H1 (cell line): ENCODE measurements at regions of chr6 and their contacts with region 1.

Region 1: GRCh38 chr6:41622206-41622958 is 15.9 kb upstream of the MDFI start:
- DNase-seq: no peak
- H3K4me3 ChIP-seq: no peak overlapping the region
- H3K27ac ChIP-seq: no peak overlapping the region
- H3K4me1 ChIP-seq: no peaks in the 10 kb centered on the region; a peak in 2 of 7 replicates
- H3K27me3 ChIP-seq: no peaks in the 10 kb centered on the region
- CTCF ChIP-seq: no peak
- EP300 ChIP-seq: no peak
- POLR2A ChIP-seq: no peak
- RAD21 ChIP-seq: no peak

Region 2: GRCh38 chr6:41527721-41528590 is 94.4 kb before region 1 on chr6:
- CTCF ChIA-PET with region 1: no interaction called
- POLR2A ChIA-PET with region 1: no interaction called
- DNase-seq: no peak
- H3K4me3 ChIP-seq: no peak overlapping the region; a peak in 1 of 8 replicates
- H3K27ac ChIP-seq: no peak overlapping the region
- H3K4me1 ChIP-seq: peaks cover 4 to 18% (median 12%) of the 10 kb centered on the region in 4 experiments; a peak in 5 of 7 replicates
- H3K27me3 ChIP-seq: peaks cover 0 to 13% (median 4%) of the 10 kb centered on the region in 4 experiments; a peak in 6 of 7 replicates
- CTCF ChIP-seq: no peak
- EP300 ChIP-seq: no peak
- POLR2A ChIP-seq: no peak
- RAD21 ChIP-seq: no peak

Region 3: DNA sequence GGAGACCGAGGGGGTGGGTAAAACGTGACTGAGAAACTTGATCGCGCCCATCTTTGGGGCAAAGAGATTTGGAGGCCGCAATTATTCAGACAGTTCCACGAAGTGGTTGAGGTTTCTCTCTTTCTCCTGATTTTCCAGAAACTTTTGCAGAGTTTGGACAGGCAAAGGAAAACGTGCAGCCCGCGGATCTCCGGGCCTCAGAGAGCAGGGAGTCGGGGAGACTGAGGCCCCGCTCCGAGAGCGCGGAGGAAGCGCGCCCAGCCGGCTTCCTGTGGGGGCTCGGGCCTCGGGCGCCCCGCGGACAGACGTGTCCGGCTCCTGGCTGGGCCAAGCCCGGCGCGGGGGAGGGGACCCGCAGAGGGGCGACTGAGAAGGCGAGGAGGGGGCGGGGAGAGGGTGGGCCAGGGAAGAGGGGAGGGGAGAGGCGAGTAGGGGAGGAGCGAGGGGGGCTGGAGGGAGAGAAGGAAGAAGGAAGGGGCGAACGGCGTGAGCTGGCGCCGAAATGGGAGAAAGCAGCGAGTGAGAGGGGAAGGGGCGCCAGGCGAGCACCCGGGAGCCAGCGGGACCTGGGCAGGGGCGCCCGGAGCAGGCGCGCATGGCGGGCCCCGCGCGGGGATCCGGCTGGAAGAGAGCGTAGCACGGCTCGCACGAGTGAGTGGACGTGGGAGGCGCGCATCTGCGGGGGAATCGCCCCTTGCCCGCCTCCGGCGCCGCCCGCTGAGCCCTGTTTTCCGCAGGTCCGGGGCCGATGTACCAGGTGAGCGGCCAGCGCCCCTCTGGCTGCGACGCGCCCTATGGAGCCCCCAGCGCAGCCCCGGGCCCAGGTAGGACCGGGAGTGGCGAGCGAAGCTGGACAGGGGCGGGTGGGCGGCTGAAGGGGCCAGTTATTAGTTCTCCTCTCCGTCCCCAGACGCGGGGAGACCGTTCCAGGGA is 15.9 kb after region 1 on chr6 and contains the start of gene MDFI:
- CTCF ChIA-PET with region 1: interaction called, 12 read pairs
- POLR2A ChIA-PET with region 1: no interaction called
- DNase-seq: peak; percentile 46 to 81
- H3K4me3 ChIP-seq: peak within 1 kb of the TSS; percentile 67 to 89 (median 78)
- H3K27ac ChIP-seq: no peak within 1 kb of the TSS
- H3K4me1 ChIP-seq: peaks cover 8 to 28% (median 17%) of the 10 kb centered on the region in 4 experiments
- H3K27me3 ChIP-seq: peaks cover 8 to 69% (median 37%) of the 10 kb centered on the region in 4 experiments; a peak in 6 of 7 replicates
- CTCF ChIP-seq: no peak
- EP300 ChIP-seq: no peak
- POLR2A ChIP-seq: no peak
- RAD21 ChIP-seq: no peak; a peak in 1 of 4 replicates
- total RNA-seq, gene MDFI: 38.5 and 41.0 TPM in 2 replicates

Region 4: DNA sequence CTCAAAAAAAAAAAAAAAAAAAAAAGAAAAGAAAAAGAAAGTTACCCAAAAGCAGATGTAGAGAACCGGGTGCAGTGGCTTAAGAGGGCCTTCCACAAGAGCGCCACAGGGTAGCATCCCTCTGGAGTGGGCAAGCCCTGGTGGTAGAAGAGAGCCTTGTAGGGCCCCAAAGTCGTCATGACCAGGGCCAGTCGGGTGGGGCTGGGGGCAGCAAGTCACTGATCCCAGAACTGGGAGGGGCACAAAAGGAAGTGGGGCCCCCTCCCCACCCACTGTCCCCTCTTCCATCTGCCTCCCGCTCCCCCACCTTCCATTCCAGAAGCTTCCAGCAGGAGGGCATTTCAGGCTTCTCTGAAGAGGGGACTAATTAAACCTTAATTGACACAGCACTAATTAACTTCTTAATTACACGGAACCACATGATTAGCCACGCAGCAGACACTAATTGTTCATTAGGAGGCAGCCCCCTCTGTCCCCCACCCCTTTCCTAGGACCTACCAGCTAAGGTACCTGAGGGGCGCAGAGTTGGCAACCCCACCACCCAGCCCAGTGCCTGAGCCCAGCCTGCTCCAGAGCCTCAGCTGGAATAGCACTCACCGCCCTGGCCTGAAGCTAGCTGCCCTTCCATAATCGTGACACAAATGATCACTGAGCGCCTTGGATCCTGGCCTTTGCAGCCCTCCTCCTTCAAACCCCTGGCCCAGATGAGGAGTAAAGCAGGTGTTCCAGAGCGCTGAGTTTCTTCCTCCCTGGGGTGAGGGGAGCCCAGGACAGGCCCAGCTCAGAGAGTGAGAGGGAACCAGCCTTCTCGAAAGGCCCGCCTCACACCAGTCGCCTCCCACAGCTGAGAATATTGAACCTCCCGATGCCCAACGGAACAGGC is 50.7 kb after region 1 on chr6:
- CTCF ChIA-PET with region 1: no interaction called
- POLR2A ChIA-PET with region 1: no interaction called
- DNase-seq: no peak
- H3K4me3 ChIP-seq: no peak overlapping the region
- H3K27ac ChIP-seq: no peak overlapping the region
- H3K4me1 ChIP-seq: peaks cover 0 to 11% (median 7%) of the 10 kb centered on the region in 4 experiments; a peak in 6 of 7 replicates
- H3K27me3 ChIP-seq: peaks cover 0 to 5% (median 1%) of the 10 kb centered on the region in 4 experiments; a peak in 4 of 7 replicates
- CTCF ChIP-seq: no peak
- EP300 ChIP-seq: no peak
- POLR2A ChIP-seq: no peak
- RAD21 ChIP-seq: no peak